Breast epithelium (tissue), 4 donors: ENCODE measurements at regions of chrX and their contacts with region 1.

Region 1: GRCh38 chrX:55709735-55710134 is 7.8 kb upstream of the RRAGB start:
- DNase-seq: no peak
- H3K4me3 ChIP-seq: no peak overlapping the region
- H3K27ac ChIP-seq: no peak overlapping the region
- H3K4me1 ChIP-seq: no peaks in the 10 kb centered on the region
- H3K27me3 ChIP-seq: peaks cover 0 to 11% of the 10 kb centered on the region in 2 donors
- CTCF ChIP-seq: no peak
- POLR2A ChIP-seq: no peak

Region 2: DNA sequence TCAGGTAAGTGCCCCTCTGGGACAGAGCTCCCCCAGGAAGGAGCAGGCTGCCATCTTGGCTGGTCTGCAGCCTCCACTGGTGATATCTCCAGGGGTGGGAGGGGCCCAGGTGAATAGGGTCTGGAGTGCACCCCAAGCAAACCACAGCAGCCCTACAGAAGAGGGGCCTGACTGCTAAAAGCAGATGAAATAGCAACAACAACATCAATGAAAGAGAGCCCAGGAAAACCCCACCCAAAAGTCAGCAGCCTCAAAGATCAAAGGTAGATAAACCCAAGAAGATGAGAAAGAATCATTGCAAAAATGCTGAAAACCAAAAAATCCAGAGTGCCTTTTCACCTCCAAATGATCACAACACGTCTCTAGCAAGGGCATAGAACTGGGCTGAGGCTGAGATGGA is 352.5 kb before region 1 on chrX:
- intact Hi-C with region 1: loop called (anchors 10 kb)
- DNase-seq: no peak
- H3K4me3 ChIP-seq: no peak overlapping the region
- H3K27ac ChIP-seq: no peak overlapping the region
- H3K4me1 ChIP-seq: no peaks in the 10 kb centered on the region
- H3K27me3 ChIP-seq: peaks cover 0 to 47% of the 10 kb centered on the region in 2 donors
- CTCF ChIP-seq: no peak
- POLR2A ChIP-seq: no peak